ENCODE measurements at regions of chr17 and their contacts with region 1.

Region 1: GRCh38 chr17:63842540-63843386 is at the start of gene SMARCD2:
- H3K4me3 Mint-ChIP-seq: peak within 1 kb of the TSS; percentile 87
- H3K27ac Mint-ChIP-seq: peak within 1 kb of the TSS; percentile 93
- H3K4me1 Mint-ChIP-seq: peaks cover 49% of the 10 kb centered on the region
- H3K27me3 Mint-ChIP-seq: no peaks in the 10 kb centered on the region

Region 2: GRCh38 chr17:63434876-63435684 is 407.7 kb before region 1 on chr17:
- intact Hi-C with region 1: loop called (anchors 5 kb)
- H3K4me3 Mint-ChIP-seq: peak overlapping the region; percentile 62
- H3K27ac Mint-ChIP-seq: peak overlapping the region; percentile 88
- H3K4me1 Mint-ChIP-seq: peaks cover 70% of the 10 kb centered on the region
- H3K27me3 Mint-ChIP-seq: peaks cover 3% of the 10 kb centered on the region

Region 3: DNA sequence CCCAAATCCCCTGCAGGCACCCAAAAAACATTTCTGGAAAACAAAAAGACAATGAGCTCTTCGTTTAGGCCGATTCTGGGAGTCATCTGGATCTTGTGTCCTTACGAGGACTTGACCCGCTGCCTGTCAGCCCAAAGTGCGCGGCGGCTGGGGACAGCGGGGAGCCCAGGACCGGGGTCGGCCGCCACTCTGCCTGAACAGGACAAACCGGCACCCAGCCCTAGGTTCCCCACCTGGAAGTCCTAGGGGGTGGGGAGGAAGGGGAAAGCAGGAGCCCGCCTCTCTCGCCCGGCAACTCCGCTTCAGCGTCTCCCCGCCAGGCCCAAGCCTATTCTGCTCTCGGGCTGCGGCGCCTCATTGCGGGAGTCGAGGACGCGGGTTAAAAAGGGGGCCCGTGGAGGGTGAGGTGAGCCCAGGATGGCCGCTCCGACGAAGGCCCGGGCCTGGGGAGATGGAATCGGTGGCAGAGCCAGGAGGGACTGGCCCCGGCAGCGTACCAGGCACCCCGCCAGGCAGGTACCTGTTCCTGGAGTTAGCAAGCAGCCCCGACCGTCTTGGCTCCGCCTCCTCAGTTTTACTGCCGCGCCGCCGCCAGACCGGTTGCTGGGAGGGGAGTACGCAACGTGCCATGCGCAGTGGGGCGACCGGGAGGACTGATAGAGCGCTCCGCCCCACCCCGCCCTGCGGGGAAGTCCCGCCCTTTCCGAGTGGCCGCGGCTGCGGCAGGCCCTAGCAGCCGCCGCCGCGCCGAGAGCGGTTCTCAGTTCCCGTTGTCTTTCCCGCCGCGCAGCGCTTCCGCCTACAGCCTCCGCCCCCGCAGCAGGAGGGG is 101.3 kb before region 1 on chr17 and contains the start of gene STRADA:
- intact Hi-C with region 1: loop called (anchors 5 kb)
- H3K4me3 Mint-ChIP-seq: peak within 1 kb of the TSS; percentile 99
- H3K27ac Mint-ChIP-seq: peak within 1 kb of the TSS; percentile 98
- H3K4me1 Mint-ChIP-seq: peaks cover 25% of the 10 kb centered on the region
- H3K27me3 Mint-ChIP-seq: no peaks in the 10 kb centered on the region

Region 4: GRCh38 chr17:63773381-63774140 is 69.2 kb before region 1 on chr17 and contains the start of gene CCDC47:
- intact Hi-C with region 1: loop called (anchors 5 kb)
- H3K4me3 Mint-ChIP-seq: peak within 1 kb of the TSS; percentile 98
- H3K27ac Mint-ChIP-seq: peak within 1 kb of the TSS; percentile 98
- H3K4me1 Mint-ChIP-seq: peaks cover 50% of the 10 kb centered on the region
- H3K27me3 Mint-ChIP-seq: no peaks in the 10 kb centered on the region

Region 5: GRCh38 chr17:63827002-63827771 is 15.6 kb before region 1 on chr17 and contains the starts of genes FTSJ3 and PSMC5:
- intact Hi-C with region 1: loop called (anchors 1 kb)
- H3K4me3 Mint-ChIP-seq: peak within 1 kb of the TSS; percentile 90
- H3K27ac Mint-ChIP-seq: peak within 1 kb of the TSS; percentile 94
- H3K4me1 Mint-ChIP-seq: peaks cover 53% of the 10 kb centered on the region
- H3K27me3 Mint-ChIP-seq: no peaks in the 10 kb centered on the region

Region 6: GRCh38 chr17:63855185-63855584 is 12.4 kb after region 1 on chr17:
- intact Hi-C with region 1: no loop called
- H3K4me3 Mint-ChIP-seq: no peak overlapping the region
- H3K27ac Mint-ChIP-seq: no peak overlapping the region
- H3K4me1 Mint-ChIP-seq: no peaks in the 10 kb centered on the region
- H3K27me3 Mint-ChIP-seq: peaks cover 10% of the 10 kb centered on the region